Posterior vena cava (tissue), 2 donors: ENCODE measurements at regions of chr12 and their contacts with region 1.

Region 1: DNA sequence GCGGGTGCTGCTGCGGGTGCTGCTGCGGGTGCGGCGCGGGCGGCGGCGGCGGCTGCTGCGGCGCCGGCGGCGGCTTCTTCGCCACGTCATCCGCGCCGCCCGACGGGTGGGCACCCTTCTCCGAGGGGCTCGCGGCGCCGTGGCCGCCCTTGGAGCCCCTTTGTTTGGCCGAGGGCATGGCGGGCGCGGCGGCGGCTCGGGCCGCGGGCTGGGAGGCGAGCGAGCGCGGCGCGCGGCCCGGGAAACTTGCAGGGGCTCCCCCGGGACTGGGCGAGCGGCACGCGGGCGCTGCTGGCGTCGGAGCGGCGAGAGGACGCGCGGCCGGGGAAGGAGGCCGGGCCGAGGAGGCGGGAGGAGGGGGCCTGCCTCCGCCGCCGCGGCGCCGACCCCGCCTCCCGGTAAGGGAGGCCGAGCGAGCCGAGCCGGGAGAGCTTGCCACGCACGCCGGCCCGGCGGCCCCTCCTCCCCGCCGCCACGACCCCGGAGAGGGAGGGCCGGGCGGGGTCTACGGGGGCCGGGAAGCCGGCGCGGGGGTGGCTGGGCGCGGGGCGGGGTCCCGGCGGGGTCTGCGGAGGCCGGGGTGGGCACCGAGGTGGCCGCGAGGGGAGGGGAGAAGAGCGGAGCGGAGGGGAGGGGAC is at the start of gene CKAP4:
- DNase-seq: peak; percentile 93
- total RNA-seq, gene CKAP4: 59.9 to 71.8 TPM

Region 2: DNA sequence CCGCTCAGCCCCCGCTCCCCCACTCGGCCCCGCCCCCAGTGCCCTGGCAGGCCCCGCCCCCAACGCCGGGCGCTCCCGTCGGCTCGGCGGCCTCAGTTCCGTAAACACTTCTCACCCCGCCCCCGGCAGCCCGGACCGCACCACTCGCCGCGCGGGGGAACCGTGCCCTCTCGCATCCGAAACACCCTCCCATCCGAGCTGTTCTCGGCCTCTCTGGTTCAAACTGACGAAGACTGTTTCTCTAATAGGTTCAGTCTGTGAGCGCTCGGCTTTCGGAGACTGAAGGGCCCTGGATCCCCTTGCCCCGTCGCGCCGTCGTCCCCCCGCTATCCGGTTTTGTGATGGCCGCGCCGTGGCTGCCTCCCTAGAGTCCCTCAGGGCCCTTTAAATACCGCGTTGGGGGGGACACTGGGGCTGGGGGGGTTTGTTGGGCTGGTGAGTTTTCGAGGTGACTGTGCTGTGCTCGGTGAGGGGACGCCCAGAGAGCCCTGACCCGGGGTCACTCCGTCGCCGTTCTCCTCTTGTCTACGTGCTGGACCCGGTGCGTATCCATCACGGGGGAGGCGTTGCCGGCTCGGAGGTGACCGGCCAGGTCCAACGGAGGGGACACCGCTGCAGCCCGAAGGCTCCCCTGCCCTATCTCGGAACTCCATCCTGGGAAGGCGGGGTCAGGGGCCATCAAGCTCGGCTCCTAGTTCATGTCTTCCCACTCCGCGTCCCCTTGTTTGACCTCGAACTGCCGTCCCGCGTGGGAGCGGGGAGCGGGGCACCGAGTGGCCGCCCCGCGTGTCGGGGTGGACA is 54.8 kb after region 1 on chr12 and contains the start of gene TCP11L2:
- intact Hi-C with region 1: loop called in 1 of 2 experiments (anchors 10 kb)
- DNase-seq: peak; percentile 97
- total RNA-seq, gene TCP11L2: 18.5 to 28.3 TPM